Heart left ventricle (tissue), 16 donors: ENCODE measurements at regions of chr7 and their contacts with region 1.

Region 1: DNA sequence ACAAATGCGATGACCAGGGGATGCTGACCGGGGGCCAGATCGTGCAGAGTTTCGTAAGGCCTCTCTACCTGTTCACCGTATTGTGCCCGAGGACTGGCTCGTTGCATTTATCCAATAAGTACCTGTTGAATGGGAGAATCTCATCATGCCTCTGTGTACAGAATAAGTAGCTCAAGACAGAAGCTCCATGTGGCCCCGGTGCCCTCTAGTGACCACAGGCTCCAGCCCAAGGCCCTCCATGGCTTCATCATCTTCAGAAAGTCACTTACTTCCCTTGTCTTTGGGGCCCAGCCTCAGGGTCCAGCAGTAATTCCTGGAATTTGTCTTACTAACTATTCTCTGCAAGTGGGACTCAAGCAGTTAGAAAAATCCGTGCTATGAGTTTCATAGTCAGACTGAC is 151.0 kb downstream of the CHN2 start:
- DNase-seq: peak in 4 of 5 donors; percentile 18 to 44 (median 38)
- ATAC-seq: peak in 3 of 4 donors; percentile 73 to 80 (median 79)
- H3K4me3 ChIP-seq: no peak overlapping the region
- H3K27ac ChIP-seq: no peak overlapping the region
- H3K4me1 ChIP-seq: peaks cover 0 to 17% (median 2%) of the 10 kb centered on the region in 12 donors
- H3K27me3 ChIP-seq: no peaks in the 10 kb centered on the region
- CTCF ChIP-seq: peak; percentile 22 to 65 (median 50)
- POLR2A ChIP-seq: no peak

Region 2: GRCh38 chr7:28926871-28927597 is 418.6 kb before region 1 on chr7:
- intact Hi-C with region 1: loop called in 2 of 10 experiments (anchors 2 to 10 kb)
- DNase-seq: peak; percentile 76 to 82 (median 79)
- ATAC-seq: peak; percentile 78 to 95 (median 94)
- H3K4me3 ChIP-seq: peak overlapping the region; percentile 8 to 64 (median 52)
- H3K27ac ChIP-seq: peak overlapping the region in 11 of 12 donors; percentile 15 to 63 (median 49)
- H3K4me1 ChIP-seq: peaks cover 0 to 22% (median 15%) of the 10 kb centered on the region in 12 donors
- H3K27me3 ChIP-seq: peaks cover 0 to 8% (median 0%) of the 10 kb centered on the region in 9 donors
- CTCF ChIP-seq: peak; percentile 72 to 90 (median 84)
- POLR2A ChIP-seq: no peak

Region 3: GRCh38 chr7:29239638-29240037 is 106.0 kb before region 1 on chr7:
- intact Hi-C with region 1: loop called in 1 of 10 experiments (anchors 10 kb)
- DNase-seq: no peak
- ATAC-seq: peak in 1 of 4 donors; percentile 47
- H3K4me3 ChIP-seq: no peak overlapping the region
- H3K27ac ChIP-seq: no peak overlapping the region
- H3K4me1 ChIP-seq: peaks cover 0 to 39% (median 16%) of the 10 kb centered on the region in 12 donors
- H3K27me3 ChIP-seq: no peaks in the 10 kb centered on the region
- CTCF ChIP-seq: peak in 8 of 12 donors; percentile 9 to 43 (median 36)
- POLR2A ChIP-seq: no peak